ENCODE measurements at regions of chr15 and their contacts with region 1.

Region 1: GRCh38 chr15:45279024-45279698 is 27.1 kb downstream of the SLC28A2 start:
- DNase-seq: peak; percentile 93 to 99 (median 98)
- ATAC-seq: peak; percentile 99 to 100
- H3K4me3 Mint-ChIP-seq: peak overlapping the region; percentile 86 to 100 (median 96)
- H3K27ac Mint-ChIP-seq: peak overlapping the region; percentile 92 to 99 (median 96)
- H3K4me1 Mint-ChIP-seq: peaks cover 3 to 27% (median 21%) of the 10 kb centered on the region in 4 donors
- H3K27me3 Mint-ChIP-seq: peaks cover 0 to 1% (median 0%) of the 10 kb centered on the region in 5 donors

Region 2: DNA sequence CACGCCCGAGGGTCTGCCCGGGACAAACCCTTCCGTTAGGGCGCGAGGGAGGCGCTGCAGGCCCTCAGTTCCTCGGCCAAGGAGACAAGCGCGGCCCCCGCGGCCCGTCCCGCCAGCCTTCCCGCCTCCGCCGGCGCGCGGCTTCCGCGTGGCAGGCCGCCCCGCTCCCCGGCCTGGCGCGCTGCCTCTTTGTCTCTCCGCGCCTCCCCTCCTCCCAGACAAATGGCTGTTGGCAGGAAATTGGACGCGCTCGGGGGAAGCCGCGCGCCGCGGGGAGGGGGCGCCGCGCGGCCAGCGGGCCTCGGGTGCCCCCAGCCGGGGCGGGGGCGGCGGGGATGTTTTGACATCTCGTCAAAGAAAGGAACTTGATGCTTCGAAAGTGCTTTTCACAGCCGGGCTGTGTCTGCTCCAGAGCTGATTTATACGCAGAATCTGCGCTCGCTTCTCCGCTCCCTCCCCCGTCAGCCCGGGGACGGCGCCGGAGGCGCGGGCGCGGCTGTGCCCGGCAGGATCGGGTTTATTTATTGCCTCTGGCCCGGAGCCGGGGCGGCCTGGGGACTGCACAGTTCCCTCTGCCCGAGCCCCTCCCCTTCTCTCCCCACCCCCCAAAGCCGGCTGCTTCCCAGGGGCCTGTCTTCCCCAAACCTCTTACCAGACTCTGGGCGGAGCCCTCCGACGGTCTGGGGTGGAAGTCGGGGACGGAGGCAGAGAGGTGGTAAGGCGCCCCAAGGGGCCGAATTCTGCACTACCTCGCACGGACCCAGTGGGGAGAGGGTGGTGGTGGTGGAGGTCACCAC is 112.1 kb before region 1 on chr15:
- POLR2A ChIA-PET with region 1: interaction called, 10 read pairs
- DNase-seq: peak; percentile 59 to 89 (median 76)
- ATAC-seq: peak; percentile 90 to 92
- H3K4me3 Mint-ChIP-seq: peak overlapping the region; percentile 64 to 87 (median 74)
- H3K27ac Mint-ChIP-seq: peak overlapping the region; percentile 60 to 95 (median 86)
- H3K4me1 Mint-ChIP-seq: peaks cover 5 to 22% (median 12%) of the 10 kb centered on the region in 4 donors
- H3K27me3 Mint-ChIP-seq: no peaks in the 10 kb centered on the region

Measured in naive thymus-derived CD8-positive, alpha-beta T cell (primary cell).